BJ (cell line): ENCODE measurements at regions of chr20 and their contacts with region 1.

Region 1: GRCh38 chr20:50460460-50461267 is 49.5 kb upstream of the PTPN1 start:
- DNase-seq: no peak
- H3K4me3 ChIP-seq: no peak overlapping the region
- H3K27me3 ChIP-seq: no peaks in the 10 kb centered on the region
- CTCF ChIP-seq: peak; percentile 95

Region 2: DNA sequence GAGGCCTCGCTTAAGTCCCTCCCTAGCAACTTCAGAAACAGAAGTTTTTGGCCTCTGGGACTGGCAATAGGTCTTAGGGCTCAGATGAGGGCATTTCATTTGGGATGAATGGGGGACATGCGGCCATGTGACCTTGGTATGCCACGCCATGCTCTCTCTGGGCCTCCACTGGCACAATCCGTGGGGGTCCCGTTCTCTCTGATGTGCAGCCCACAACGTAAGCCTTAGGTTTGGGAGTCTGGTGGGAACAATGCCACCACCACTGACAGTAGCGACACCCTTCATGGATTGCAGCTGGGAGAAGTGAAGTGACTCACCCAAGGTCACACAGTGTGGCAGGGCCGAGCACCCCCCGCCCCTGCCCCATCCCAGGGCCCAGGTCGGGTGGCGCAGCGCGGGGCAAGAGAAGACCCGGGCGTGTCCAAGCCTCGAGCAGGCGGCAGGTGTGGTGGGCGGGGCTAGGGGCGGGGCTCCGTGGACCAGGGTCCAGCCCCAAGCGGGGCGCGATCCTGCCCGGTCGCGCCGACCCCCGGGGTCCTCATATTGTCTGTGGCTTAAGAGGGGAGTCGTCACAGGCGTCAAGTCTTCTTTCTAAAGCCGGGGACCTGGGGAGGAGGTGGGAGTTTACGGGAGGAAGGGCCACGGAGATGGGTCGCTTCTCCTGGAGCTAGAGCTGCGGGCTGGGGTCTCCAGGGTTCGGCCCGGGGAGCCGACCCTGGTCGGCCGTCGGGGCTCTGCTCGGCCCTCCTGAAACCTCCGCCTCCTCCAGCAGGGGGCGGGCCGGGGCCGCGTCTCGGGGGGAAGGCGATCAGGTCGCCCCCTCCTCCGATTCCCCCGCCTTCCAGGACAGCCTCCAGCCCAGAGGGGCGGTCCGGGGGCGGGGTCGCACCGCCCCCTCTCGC is 270.7 kb before region 1 on chr20:
- CTCF ChIA-PET with region 1: interaction called, 195 read pairs
- POLR2A ChIA-PET with region 1: no interaction called
- DNase-seq: no peak
- H3K4me3 ChIP-seq: peak overlapping the region; percentile 62
- H3K27me3 ChIP-seq: no peaks in the 10 kb centered on the region
- CTCF ChIP-seq: peak; percentile 82

Region 3: DNA sequence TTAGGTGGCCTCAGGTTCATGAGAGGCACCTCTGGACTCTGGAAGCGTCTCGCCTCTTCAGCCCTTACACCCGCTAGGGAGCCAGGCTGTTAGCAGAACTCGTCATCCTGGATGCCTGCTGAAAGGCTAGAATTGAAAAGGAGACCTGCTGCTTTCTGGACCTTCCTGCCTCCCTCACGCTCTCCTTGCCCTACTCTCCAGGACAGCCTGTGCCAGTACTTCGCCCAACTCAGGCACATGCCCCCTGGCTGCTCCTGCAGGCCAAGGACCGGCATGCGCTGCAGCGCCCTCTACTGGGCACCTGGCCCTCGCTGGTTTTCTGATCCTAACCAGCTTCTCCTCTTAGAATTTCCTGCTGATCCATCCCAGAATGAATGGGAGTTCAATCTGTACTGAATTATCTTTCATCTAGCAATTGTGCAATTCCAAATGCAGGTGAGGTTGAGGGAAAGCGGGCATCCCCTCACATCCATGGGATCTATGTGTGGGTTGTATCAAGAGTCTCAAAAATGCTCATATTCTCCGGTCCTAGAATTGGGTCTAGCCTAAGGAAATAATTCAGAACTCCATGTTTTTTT is 127.5 kb after region 1 on chr20:
- CTCF ChIA-PET with region 1: interaction called, 11 read pairs
- POLR2A ChIA-PET with region 1: no interaction called
- DNase-seq: no peak
- H3K4me3 ChIP-seq: no peak overlapping the region
- H3K27me3 ChIP-seq: no peaks in the 10 kb centered on the region
- CTCF ChIP-seq: peak; percentile 98